Psoas muscle (tissue), 8 donors: ENCODE measurements at regions of chr7 and their contacts with region 1.

Region 1: DNA sequence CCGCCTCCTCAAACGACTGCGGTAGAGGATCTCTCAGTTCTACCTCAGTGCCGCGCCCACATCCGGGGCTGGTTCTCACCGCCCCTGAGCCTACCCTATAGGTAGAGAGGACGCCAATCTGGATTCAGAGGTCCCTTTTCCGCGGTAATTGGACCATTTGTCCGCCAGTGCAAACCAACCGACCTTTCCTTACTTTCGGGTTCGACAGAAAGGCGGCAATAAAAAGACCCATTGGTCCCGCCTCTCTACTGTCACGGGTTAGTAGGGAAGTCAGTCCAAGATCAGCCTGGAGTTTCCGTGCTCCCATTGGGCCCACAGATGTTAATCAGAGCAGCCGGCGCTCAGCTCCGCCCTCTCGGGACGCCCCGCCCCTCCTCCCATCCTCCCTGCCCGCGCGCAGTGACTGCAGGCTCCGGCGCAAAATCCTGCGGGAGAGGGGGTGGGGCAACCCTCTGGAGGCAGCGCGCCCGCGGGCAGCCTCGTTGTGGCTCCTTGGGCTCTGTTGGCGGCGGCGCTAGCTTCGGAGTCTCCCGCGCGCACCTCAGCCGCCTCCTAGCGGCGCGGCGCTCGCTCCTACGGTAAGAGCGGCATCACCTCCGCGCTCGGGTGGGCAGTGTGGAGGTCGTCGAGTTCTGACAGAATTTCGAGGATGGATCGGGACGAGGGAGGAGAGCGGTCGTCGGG is at the starts of genes PHTF2 and TMEM60:
- DNase-seq: peak; percentile 98 to 99
- ATAC-seq: peak; percentile 86 to 94 (median 88)
- H3K4me3 ChIP-seq: peak within 1 kb of the TSS; percentile 95
- H3K27ac ChIP-seq: peak within 1 kb of the TSS; percentile 98
- H3K4me1 ChIP-seq: peaks cover 44% of the 10 kb centered on the region
- H3K27me3 ChIP-seq: no peaks in the 10 kb centered on the region
- CTCF ChIP-seq: peak; percentile 50
- total RNA-seq, gene PHTF2: 48.2 to 88.7 (median 66.3) TPM
- total RNA-seq, gene TMEM60: 7.7 to 13.8 (median 12.3) TPM

Region 2: DNA sequence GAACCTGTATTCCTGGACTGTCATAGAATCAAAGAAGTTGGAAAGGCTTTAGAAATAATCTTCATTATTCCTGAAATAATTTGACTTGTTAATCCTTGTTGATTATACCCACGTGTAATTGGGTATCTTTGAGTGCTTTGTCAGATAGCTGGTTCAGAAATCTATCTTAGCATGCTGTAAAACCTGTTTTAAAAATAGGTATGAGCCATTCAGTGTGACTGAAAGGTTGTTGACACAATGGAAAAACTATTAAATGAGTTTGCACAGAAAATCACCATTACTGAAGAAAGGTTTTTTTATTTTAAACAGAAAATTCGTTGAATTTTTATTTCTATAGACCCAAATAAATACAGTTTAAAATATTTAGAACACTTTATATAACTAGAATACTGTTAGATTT is 38.8 kb after region 1 on chr7:
- intact Hi-C with region 1: loop called in 1 of 2 experiments (anchors 5 kb)
- DNase-seq: no peak
- ATAC-seq: peak; percentile 61 to 75 (median 64)
- H3K4me3 ChIP-seq: no peak overlapping the region
- H3K27ac ChIP-seq: peak overlapping the region; percentile 86
- H3K4me1 ChIP-seq: peaks cover 56% of the 10 kb centered on the region
- H3K27me3 ChIP-seq: no peaks in the 10 kb centered on the region
- CTCF ChIP-seq: no peak

Region 3: GRCh38 chr7:77855371-77856083 is 57.0 kb after region 1 on chr7:
- intact Hi-C with region 1: loop called in 1 of 2 experiments (anchors 5 kb)
- DNase-seq: peak; percentile 79 to 94
- ATAC-seq: peak; percentile 84 to 94 (median 94)
- H3K4me3 ChIP-seq: peak overlapping the region; percentile 25
- H3K27ac ChIP-seq: peak overlapping the region; percentile 61
- H3K4me1 ChIP-seq: peaks cover 11% of the 10 kb centered on the region
- H3K27me3 ChIP-seq: no peaks in the 10 kb centered on the region
- CTCF ChIP-seq: no peak

Region 4: DNA sequence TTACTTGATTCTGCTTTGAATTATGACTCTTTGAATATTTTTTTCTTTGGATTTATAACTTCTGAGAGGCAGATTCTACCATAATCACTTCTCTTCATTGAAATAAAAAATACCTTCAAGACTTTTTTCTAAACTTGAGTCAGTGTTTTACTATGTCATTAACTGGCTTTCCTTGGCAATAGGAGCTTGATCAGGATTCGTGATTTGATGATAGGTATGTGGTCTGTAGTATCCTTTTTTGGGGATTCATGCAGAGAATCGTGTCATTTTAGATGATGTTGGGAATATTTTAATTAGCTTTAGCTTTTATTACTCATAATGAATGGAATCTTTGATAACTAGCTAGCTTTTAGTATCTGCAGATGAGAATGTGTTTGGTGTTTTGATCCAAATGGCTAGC is 83.3 kb after region 1 on chr7:
- intact Hi-C with region 1: loop called (anchors 5 to 10 kb)
- DNase-seq: no peak
- ATAC-seq: no peak
- H3K4me3 ChIP-seq: no peak overlapping the region
- H3K27ac ChIP-seq: peak overlapping the region; percentile 7
- H3K4me1 ChIP-seq: peaks cover 18% of the 10 kb centered on the region
- H3K27me3 ChIP-seq: no peaks in the 10 kb centered on the region
- CTCF ChIP-seq: no peak

Region 5: DNA sequence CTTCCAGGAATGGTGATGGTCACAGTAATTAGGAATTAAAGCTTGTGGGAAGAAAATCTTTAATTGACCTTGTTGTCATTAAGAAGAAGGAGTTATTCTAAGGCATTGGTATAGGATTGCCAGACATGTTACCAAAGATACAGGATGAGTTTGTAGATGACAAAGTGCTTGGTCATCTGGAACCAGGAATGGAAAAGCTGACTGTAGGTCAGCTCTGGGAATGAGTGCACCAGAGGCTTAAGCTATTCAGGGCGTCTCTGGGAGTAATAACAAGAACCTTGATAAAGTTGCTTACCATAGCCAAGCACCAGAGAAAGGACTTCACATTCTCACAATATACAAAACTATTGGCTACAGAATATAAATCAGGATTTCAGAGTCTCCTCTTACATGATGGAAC is 89.0 kb after region 1 on chr7:
- intact Hi-C with region 1: loop called (anchors 5 to 10 kb)
- DNase-seq: no peak
- ATAC-seq: peak; percentile 89 to 97 (median 94)
- H3K4me3 ChIP-seq: no peak overlapping the region
- H3K27ac ChIP-seq: peak overlapping the region; percentile 71
- H3K4me1 ChIP-seq: peaks cover 34% of the 10 kb centered on the region
- H3K27me3 ChIP-seq: no peaks in the 10 kb centered on the region
- CTCF ChIP-seq: no peak